ENCODE measurements at regions of chr10 and their contacts with region 1.

Region 1: GRCh38 chr10:70233109-70233938 is at the start of gene PPA1:
- DNase-seq: peak; percentile 98 to 100 (median 99)
- H3K4me3 ChIP-seq: peak within 1 kb of the TSS; percentile 67 to 77
- H3K4me3 Mint-ChIP-seq: peak within 1 kb of the TSS; percentile 89 to 94 (median 91)
- H3K27ac ChIP-seq: peak within 1 kb of the TSS; percentile 82
- H3K27ac Mint-ChIP-seq: peak within 1 kb of the TSS; percentile 88 to 97 (median 96)
- H3K4me1 ChIP-seq: peaks cover 20% of the 10 kb centered on the region
- H3K4me1 Mint-ChIP-seq: peaks cover 14 to 42% (median 29%) of the 10 kb centered on the region in 4 donors
- H3K27me3 ChIP-seq: no peaks in the 10 kb centered on the region
- H3K27me3 Mint-ChIP-seq: peaks cover 0 to 1% of the 10 kb centered on the region in 2 donors
- total RNA-seq, gene PPA1: 57.4 to 60.4 TPM

Region 2: GRCh38 chr10:70169649-70170364 is 63.5 kb before region 1 on chr10:
- CTCF ChIA-PET with region 1: interaction called, 3 read pairs
- POLR2A ChIA-PET with region 1: interaction called, 19 read pairs
- intact Hi-C with region 1: loop called (anchors 1 kb)
- DNase-seq: peak in 1 of 5 donors; percentile 38
- H3K4me3 ChIP-seq: peak overlapping the region; percentile 73 to 95
- H3K4me3 Mint-ChIP-seq: peak overlapping the region; percentile 90 to 97 (median 94)
- H3K27ac ChIP-seq: peak overlapping the region; percentile 93
- H3K27ac Mint-ChIP-seq: peak overlapping the region; percentile 90 to 99 (median 96)
- H3K4me1 ChIP-seq: peaks cover 76% of the 10 kb centered on the region
- H3K4me1 Mint-ChIP-seq: peaks cover 39 to 85% (median 54%) of the 10 kb centered on the region in 4 donors
- H3K27me3 ChIP-seq: no peaks in the 10 kb centered on the region
- H3K27me3 Mint-ChIP-seq: no peaks in the 10 kb centered on the region

Region 3: GRCh38 chr10:70381471-70382421 is 148.4 kb after region 1 on chr10:
- CTCF ChIA-PET with region 1: interaction called, 3 read pairs
- POLR2A ChIA-PET with region 1: interaction called, 4 read pairs
- intact Hi-C with region 1: loop called (anchors 1 kb)
- DNase-seq: peak in 1 of 5 donors; percentile 10
- H3K4me3 ChIP-seq: peak overlapping the region; percentile 82 to 88
- H3K4me3 Mint-ChIP-seq: peak overlapping the region; percentile 88 to 92 (median 90)
- H3K27ac ChIP-seq: peak overlapping the region; percentile 16
- H3K27ac Mint-ChIP-seq: peak overlapping the region in 4 of 7 donors; percentile 37 to 70 (median 50)
- H3K4me1 ChIP-seq: peaks cover 13% of the 10 kb centered on the region
- H3K4me1 Mint-ChIP-seq: peaks cover 0 to 14% (median 6%) of the 10 kb centered on the region in 4 donors
- H3K27me3 ChIP-seq: no peaks in the 10 kb centered on the region
- H3K27me3 Mint-ChIP-seq: no peaks in the 10 kb centered on the region

Region 4: GRCh38 chr10:70478191-70479164 is 245.2 kb after region 1 on chr10 and contains the start of gene PALD1:
- CTCF ChIA-PET with region 1: no interaction called
- POLR2A ChIA-PET with region 1: interaction called, 3 read pairs
- intact Hi-C with region 1: loop called (anchors 2 kb)
- DNase-seq: peak in 3 of 5 donors; percentile 17 to 51 (median 22)
- H3K4me3 ChIP-seq: peak within 1 kb of the TSS in 1 of 2 donors; percentile 33
- H3K4me3 Mint-ChIP-seq: peak within 1 kb of the TSS; percentile 79 to 92 (median 80)
- H3K27ac ChIP-seq: no peak within 1 kb of the TSS
- H3K27ac Mint-ChIP-seq: peak within 1 kb of the TSS; percentile 68 to 95 (median 89)
- H3K4me1 ChIP-seq: peaks cover 50% of the 10 kb centered on the region
- H3K4me1 Mint-ChIP-seq: peaks cover 27 to 58% (median 45%) of the 10 kb centered on the region in 4 donors
- H3K27me3 ChIP-seq: no peaks in the 10 kb centered on the region
- H3K27me3 Mint-ChIP-seq: peaks cover 1 to 2% of the 10 kb centered on the region in 2 donors
- total RNA-seq, gene PALD1: not detected

Measured in CD4-positive, alpha-beta memory T cell (primary cell).